Transverse colon (tissue), 4 donors: ENCODE measurements at regions of chr10 and their contacts with region 1.

Region 1: GRCh38 chr10:97063983-97064837 is 121.5 kb downstream of the SLIT1 start:
- DNase-seq: no peak
- H3K4me3 ChIP-seq: no peak overlapping the region
- H3K27ac ChIP-seq: no peak overlapping the region
- H3K4me1 ChIP-seq: no peaks in the 10 kb centered on the region
- H3K27me3 ChIP-seq: no peaks in the 10 kb centered on the region
- CTCF ChIP-seq: no peak
- EP300 ChIP-seq: no peak
- POLR2A ChIP-seq: no peak

Region 2: GRCh38 chr10:96168546-96168945 is 895.7 kb before region 1 on chr10:
- in situ Hi-C with region 1: no loop called
- intact Hi-C with region 1: no loop called
- DNase-seq: no peak
- H3K4me3 ChIP-seq: no peak overlapping the region
- H3K27ac ChIP-seq: no peak overlapping the region
- H3K4me1 ChIP-seq: no peaks in the 10 kb centered on the region
- H3K27me3 ChIP-seq: no peaks in the 10 kb centered on the region
- CTCF ChIP-seq: no peak
- EP300 ChIP-seq: no peak
- POLR2A ChIP-seq: no peak

Region 3: GRCh38 chr10:97102441-97102840 is 38.2 kb after region 1 on chr10:
- in situ Hi-C with region 1: no loop called
- intact Hi-C with region 1: loop called (anchors 1 kb)
- DNase-seq: no peak
- H3K4me3 ChIP-seq: no peak overlapping the region
- H3K27ac ChIP-seq: no peak overlapping the region
- H3K4me1 ChIP-seq: no peaks in the 10 kb centered on the region
- H3K27me3 ChIP-seq: peaks cover 10% of the 10 kb centered on the region
- CTCF ChIP-seq: no peak
- EP300 ChIP-seq: no peak
- POLR2A ChIP-seq: no peak